Activated T-helper 1 cell treated with anti-CD3 and anti-CD28 coated beads, Interleukin-12 subunit alpha, Interleukin-12 subunit beta, Interleukin-2, Interleukin-4 antibody, amounts not matched to agents 30 ng/mL and 10 ng/mL and 1 ng/mL, durations not matched to agents 14 hours and 24 hours and 36 hours (primary cell): ENCODE measurements at regions of chr20 and their contacts with region 1.

Region 1: GRCh38 chr20:58309575-58310290 is at the start of gene RAB22A:
- DNase-seq: peak; percentile 79
- H3K4me3 Mint-ChIP-seq: peak within 1 kb of the TSS; percentile 95
- H3K27ac Mint-ChIP-seq: peak within 1 kb of the TSS; percentile 94
- H3K4me1 Mint-ChIP-seq: peaks cover 63% of the 10 kb centered on the region
- H3K27me3 Mint-ChIP-seq: no peaks in the 10 kb centered on the region
- total RNA-seq, gene RAB22A: 16.9 and 19.2 TPM in 2 replicates

Region 2: GRCh38 chr20:57619051-57619834 is 690.5 kb before region 1 on chr20:
- intact Hi-C with region 1: loop called (anchors 2 kb)
- DNase-seq: peak; percentile 71
- H3K4me3 Mint-ChIP-seq: peak overlapping the region; percentile 72
- H3K27ac Mint-ChIP-seq: peak overlapping the region; percentile 86
- H3K4me1 Mint-ChIP-seq: peaks cover 51% of the 10 kb centered on the region
- H3K27me3 Mint-ChIP-seq: peaks cover 17% of the 10 kb centered on the region

Region 3: GRCh38 chr20:58251921-58252591 is 57.7 kb before region 1 on chr20:
- intact Hi-C with region 1: loop called (anchors 5 kb)
- DNase-seq: no peak
- H3K4me3 Mint-ChIP-seq: no peak overlapping the region
- H3K27ac Mint-ChIP-seq: peak overlapping the region; percentile 36
- H3K4me1 Mint-ChIP-seq: peaks cover 43% of the 10 kb centered on the region
- H3K27me3 Mint-ChIP-seq: no peaks in the 10 kb centered on the region

Region 4: DNA sequence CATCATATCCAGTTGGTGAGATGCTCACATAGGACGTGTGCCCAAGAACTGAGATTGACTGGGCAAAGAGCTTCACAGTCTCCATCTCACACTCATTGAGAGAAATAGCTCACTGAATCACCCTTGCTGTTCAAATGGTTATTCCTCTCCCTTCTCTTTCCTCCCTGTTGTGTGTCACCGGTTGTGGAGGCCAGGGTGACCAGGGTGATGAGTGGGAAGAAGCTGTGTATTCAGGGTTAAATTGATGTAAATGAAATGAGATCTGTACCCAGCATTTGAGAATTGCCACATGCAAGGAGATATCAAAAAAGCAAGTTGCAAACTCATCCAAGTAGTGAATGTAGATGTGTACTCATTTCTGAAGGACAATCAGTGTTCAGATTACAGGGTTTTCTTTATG is 42.7 kb after region 1 on chr20:
- intact Hi-C with region 1: loop called (anchors 2 kb)
- DNase-seq: no peak
- H3K4me3 Mint-ChIP-seq: no peak overlapping the region
- H3K27ac Mint-ChIP-seq: no peak overlapping the region
- H3K4me1 Mint-ChIP-seq: peaks cover 10% of the 10 kb centered on the region
- H3K27me3 Mint-ChIP-seq: no peaks in the 10 kb centered on the region

Region 5: GRCh38 chr20:58407966-58408557 is 98.3 kb after region 1 on chr20:
- intact Hi-C with region 1: loop called (anchors 5 kb)
- DNase-seq: peak; percentile 11
- H3K4me3 Mint-ChIP-seq: peak overlapping the region; percentile 65
- H3K27ac Mint-ChIP-seq: peak overlapping the region; percentile 87
- H3K4me1 Mint-ChIP-seq: peaks cover 36% of the 10 kb centered on the region
- H3K27me3 Mint-ChIP-seq: no peaks in the 10 kb centered on the region

Region 6: GRCh38 chr20:58980700-58981627 is 671.2 kb after region 1 on chr20 and contains the start of gene NELFCD:
- intact Hi-C with region 1: loop called (anchors 2 kb)
- DNase-seq: peak; percentile 86
- H3K4me3 Mint-ChIP-seq: peak within 1 kb of the TSS; percentile 94
- H3K27ac Mint-ChIP-seq: peak within 1 kb of the TSS; percentile 91
- H3K4me1 Mint-ChIP-seq: peaks cover 21% of the 10 kb centered on the region
- H3K27me3 Mint-ChIP-seq: peaks cover 12% of the 10 kb centered on the region
- total RNA-seq, gene NELFCD: 121 and 135 TPM in 2 replicates

Region 7: GRCh38 chr20:59159493-59160376 is 850.0 kb after region 1 on chr20:
- intact Hi-C with region 1: loop called (anchors 5 kb)
- DNase-seq: peak; percentile 52
- H3K4me3 Mint-ChIP-seq: peak overlapping the region; percentile 78
- H3K27ac Mint-ChIP-seq: peak overlapping the region; percentile 92
- H3K4me1 Mint-ChIP-seq: peaks cover 80% of the 10 kb centered on the region
- H3K27me3 Mint-ChIP-seq: no peaks in the 10 kb centered on the region